Caco-2 (cell line): ENCODE measurements at regions of chr12 and their contacts with region 1.

Region 1: GRCh38 chr12:40697566-40698259 is 5.5 kb downstream of the CNTN1 start:
- DNase-seq: no peak
- H3K4me3 ChIP-seq: no peak overlapping the region
- H3K4me3 Mint-ChIP-seq: no peak overlapping the region
- H3K27ac Mint-ChIP-seq: no peak overlapping the region
- H3K4me1 ChIP-seq: no peaks in the 10 kb centered on the region
- H3K4me1 Mint-ChIP-seq: no peaks in the 10 kb centered on the region
- H3K27me3 ChIP-seq: no peaks in the 10 kb centered on the region
- H3K27me3 Mint-ChIP-seq: peaks cover 3% of the 10 kb centered on the region
- CTCF ChIP-seq: no peak

Region 2: GRCh38 chr12:40668099-40668529 is 29.6 kb before region 1 on chr12:
- CTCF ChIA-PET with region 1: no interaction called
- POLR2A ChIA-PET with region 1: no interaction called
- intact Hi-C with region 1: no loop called
- DNase-seq: no peak
- H3K4me3 ChIP-seq: no peak overlapping the region
- H3K4me3 Mint-ChIP-seq: no peak overlapping the region
- H3K27ac Mint-ChIP-seq: no peak overlapping the region
- H3K4me1 ChIP-seq: no peaks in the 10 kb centered on the region
- H3K4me1 Mint-ChIP-seq: no peaks in the 10 kb centered on the region
- H3K27me3 ChIP-seq: no peaks in the 10 kb centered on the region
- H3K27me3 Mint-ChIP-seq: no peaks in the 10 kb centered on the region
- CTCF ChIP-seq: no peak

Region 3: GRCh38 chr12:40762072-40762471 is 64.4 kb after region 1 on chr12:
- CTCF ChIA-PET with region 1: no interaction called
- POLR2A ChIA-PET with region 1: no interaction called
- intact Hi-C with region 1: no loop called
- DNase-seq: no peak
- H3K4me3 ChIP-seq: no peak overlapping the region
- H3K4me3 Mint-ChIP-seq: no peak overlapping the region
- H3K27ac Mint-ChIP-seq: no peak overlapping the region
- H3K4me1 ChIP-seq: no peaks in the 10 kb centered on the region
- H3K4me1 Mint-ChIP-seq: no peaks in the 10 kb centered on the region
- H3K27me3 ChIP-seq: no peaks in the 10 kb centered on the region; the same call in 1 of the 2 replicates
- H3K27me3 Mint-ChIP-seq: peaks cover 2% of the 10 kb centered on the region
- CTCF ChIP-seq: no peak

Region 4: GRCh38 chr12:41627476-41627875 is 929.8 kb after region 1 on chr12:
- CTCF ChIA-PET with region 1: no interaction called
- POLR2A ChIA-PET with region 1: no interaction called
- intact Hi-C with region 1: no loop called
- DNase-seq: no peak
- H3K4me3 ChIP-seq: no peak overlapping the region
- H3K4me3 Mint-ChIP-seq: no peak overlapping the region
- H3K27ac Mint-ChIP-seq: no peak overlapping the region
- H3K4me1 ChIP-seq: no peaks in the 10 kb centered on the region
- H3K4me1 Mint-ChIP-seq: no peaks in the 10 kb centered on the region
- H3K27me3 ChIP-seq: no peaks in the 10 kb centered on the region
- H3K27me3 Mint-ChIP-seq: no peaks in the 10 kb centered on the region
- CTCF ChIP-seq: no peak

Region 5: GRCh38 chr12:42365486-42365885 is 1667.8 kb after region 1 on chr12:
- CTCF ChIA-PET with region 1: no interaction called
- POLR2A ChIA-PET with region 1: interaction called, 14 read pairs
- intact Hi-C with region 1: no loop called
- DNase-seq: no peak
- H3K4me3 ChIP-seq: no peak overlapping the region
- H3K4me3 Mint-ChIP-seq: no peak overlapping the region
- H3K27ac Mint-ChIP-seq: no peak overlapping the region
- H3K4me1 ChIP-seq: no peaks in the 10 kb centered on the region; the same call in 1 of the 2 replicates
- H3K4me1 Mint-ChIP-seq: peaks cover 14% of the 10 kb centered on the region
- H3K27me3 ChIP-seq: no peaks in the 10 kb centered on the region
- H3K27me3 Mint-ChIP-seq: no peaks in the 10 kb centered on the region
- CTCF ChIP-seq: no peak